ENCODE measurements at regions of chr4 and their contacts with region 1.

Region 1: GRCh38 chr4:48205107-48205506 is 64.5 kb downstream of the TEC start:
- H3K4me3 Mint-ChIP-seq: no peak overlapping the region
- H3K27ac Mint-ChIP-seq: no peak overlapping the region
- H3K4me1 Mint-ChIP-seq: peaks cover 44% of the 10 kb centered on the region
- H3K27me3 Mint-ChIP-seq: no peaks in the 10 kb centered on the region

Region 2: DNA sequence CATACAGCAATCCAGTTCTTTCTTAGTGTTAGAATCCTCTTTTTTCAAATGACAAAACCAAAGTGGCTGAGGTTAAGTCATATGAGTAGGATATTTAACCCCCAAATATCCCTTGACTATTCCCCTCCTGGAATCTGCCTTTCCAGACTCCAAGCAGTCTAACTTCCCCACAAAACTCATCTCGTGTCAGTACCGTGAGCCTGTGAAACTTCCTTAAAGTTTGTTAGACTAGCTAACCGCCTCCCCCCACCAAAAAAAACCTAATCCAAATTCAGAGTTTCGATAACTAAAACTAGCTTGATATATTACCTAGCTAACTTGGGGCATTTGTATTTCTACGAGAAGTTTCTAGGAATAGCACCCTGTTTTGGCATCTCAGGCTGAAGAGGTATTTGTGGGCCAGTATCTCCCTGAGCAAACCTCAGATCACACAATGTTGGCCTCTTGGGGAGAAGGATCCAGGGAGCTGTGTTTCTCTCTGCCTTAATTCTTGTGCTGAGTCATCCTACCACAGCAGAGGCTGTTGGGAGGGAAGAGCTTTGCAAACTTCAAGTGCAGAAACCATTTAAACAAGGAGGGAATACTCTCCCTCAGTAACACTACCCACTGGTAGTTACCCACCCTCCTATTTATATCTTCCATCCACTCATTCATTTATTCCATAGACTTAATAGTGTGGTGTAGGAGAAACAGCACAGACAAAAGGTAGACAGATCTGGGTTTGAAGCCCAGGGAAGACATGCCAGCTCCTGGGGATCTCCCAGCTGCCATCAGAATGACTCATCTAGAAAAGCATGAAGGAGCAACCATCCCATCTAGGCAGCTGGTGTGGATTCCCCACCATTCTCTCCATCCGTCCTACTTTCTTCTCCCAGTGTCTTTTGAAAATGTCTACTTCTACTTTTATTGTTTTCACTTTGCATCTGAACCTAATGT is 31.8 kb before region 1 on chr4:
- intact Hi-C with region 1: loop called (anchors 5 kb)
- H3K4me3 Mint-ChIP-seq: no peak overlapping the region
- H3K27ac Mint-ChIP-seq: peak overlapping the region; percentile 73
- H3K4me1 Mint-ChIP-seq: peaks cover 22% of the 10 kb centered on the region
- H3K27me3 Mint-ChIP-seq: no peaks in the 10 kb centered on the region

Region 3: GRCh38 chr4:48462363-48462762 is 257.3 kb after region 1 on chr4:
- intact Hi-C with region 1: no loop called
- H3K4me3 Mint-ChIP-seq: no peak overlapping the region
- H3K27ac Mint-ChIP-seq: no peak overlapping the region
- H3K4me1 Mint-ChIP-seq: no peaks in the 10 kb centered on the region
- H3K27me3 Mint-ChIP-seq: peaks cover 2% of the 10 kb centered on the region